CD8-positive, alpha-beta T cell (primary cell): ENCODE measurements at regions of chr17 and their contacts with region 1.

Region 1: GRCh38 chr17:75855310-75856081 is at the start of gene WBP2:
- DNase-seq: peak; percentile 93 to 100 (median 96)
- ATAC-seq: peak; percentile 90
- H3K4me3 ChIP-seq: peak within 1 kb of the TSS; percentile 79 to 83
- H3K4me3 Mint-ChIP-seq: no peak within 1 kb of the TSS
- H3K27ac ChIP-seq: peak within 1 kb of the TSS; percentile 84 to 94
- H3K27ac Mint-ChIP-seq: peak within 1 kb of the TSS; percentile 94
- H3K4me1 ChIP-seq: peaks cover 19% of the 10 kb centered on the region
- H3K4me1 Mint-ChIP-seq: peaks cover 29% of the 10 kb centered on the region
- H3K27me3 ChIP-seq: no peaks in the 10 kb centered on the region
- H3K27me3 Mint-ChIP-seq: no peaks in the 10 kb centered on the region
- CTCF ChIP-seq: peak; percentile 27
- total RNA-seq, gene WBP2: 69.1 to 80.2 TPM

Region 2: GRCh38 chr17:75667021-75667790 is 188.3 kb before region 1 on chr17 and contains the starts of genes RECQL5 and SAP30BP:
- CTCF ChIA-PET with region 1: no interaction called
- POLR2A ChIA-PET with region 1: interaction called, 3 read pairs
- intact Hi-C with region 1: loop called (anchors 1 to 5 kb)
- DNase-seq: peak; percentile 95 to 99 (median 98)
- ATAC-seq: peak; percentile 100
- H3K4me3 ChIP-seq: peak within 1 kb of the TSS; percentile 78 to 85
- H3K4me3 Mint-ChIP-seq: peak within 1 kb of the TSS; percentile 58
- H3K27ac ChIP-seq: peak within 1 kb of the TSS; percentile 88 to 96
- H3K27ac Mint-ChIP-seq: no peak within 1 kb of the TSS
- H3K4me1 ChIP-seq: peaks cover 18% of the 10 kb centered on the region
- H3K4me1 Mint-ChIP-seq: peaks cover 33% of the 10 kb centered on the region
- H3K27me3 ChIP-seq: no peaks in the 10 kb centered on the region
- H3K27me3 Mint-ChIP-seq: no peaks in the 10 kb centered on the region
- CTCF ChIP-seq: no peak
- total RNA-seq, gene RECQL5: 11.2 to 13.2 TPM
- total RNA-seq, gene SAP30BP: 303 to 305 TPM

Region 3: DNA sequence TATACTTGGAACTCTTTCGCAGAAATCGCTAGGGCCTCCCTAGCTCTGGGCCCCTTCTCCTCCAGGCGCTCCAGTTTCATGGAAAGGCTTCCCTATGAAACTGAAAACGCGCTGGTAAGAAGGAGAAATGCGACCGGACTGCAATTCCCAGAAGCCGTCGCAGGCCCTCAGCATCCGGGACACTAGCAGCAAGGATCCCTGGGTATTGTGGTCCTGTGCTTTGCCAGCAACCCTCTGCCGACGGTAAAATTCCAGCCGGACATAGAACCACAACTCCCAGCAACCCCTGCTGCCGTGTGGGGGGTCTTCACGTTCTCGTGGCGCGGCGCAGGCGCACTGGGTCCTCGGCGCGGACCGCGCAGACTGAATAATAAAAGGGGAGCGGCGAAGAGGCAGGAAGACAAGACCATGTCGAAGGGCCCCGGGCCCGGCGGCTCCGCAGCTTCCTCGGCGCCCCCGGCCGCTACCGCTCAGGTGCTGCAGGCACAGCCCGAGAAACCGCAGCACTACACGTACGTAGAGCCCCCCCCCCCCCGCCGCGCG is 71.0 kb before region 1 on chr17 and contains the start of gene UNK:
- CTCF ChIA-PET with region 1: interaction called, 10 read pairs
- POLR2A ChIA-PET with region 1: interaction called, 45 read pairs
- intact Hi-C with region 1: loop called (anchors 1 kb)
- DNase-seq: peak; percentile 91 to 99 (median 96)
- ATAC-seq: peak; percentile 64
- H3K4me3 ChIP-seq: peak within 1 kb of the TSS; percentile 57 to 78
- H3K4me3 Mint-ChIP-seq: peak within 1 kb of the TSS; percentile 93
- H3K27ac ChIP-seq: peak within 1 kb of the TSS; percentile 95 to 100
- H3K27ac Mint-ChIP-seq: peak within 1 kb of the TSS; percentile 98
- H3K4me1 ChIP-seq: peaks cover 39% of the 10 kb centered on the region
- H3K4me1 Mint-ChIP-seq: peaks cover 49% of the 10 kb centered on the region
- H3K27me3 ChIP-seq: no peaks in the 10 kb centered on the region
- H3K27me3 Mint-ChIP-seq: no peaks in the 10 kb centered on the region
- CTCF ChIP-seq: no peak
- total RNA-seq, gene UNK: 37.3 to 42.8 TPM

Region 4: GRCh38 chr17:75872434-75873351 is 17.2 kb after region 1 on chr17:
- CTCF ChIA-PET with region 1: interaction called, 51 read pairs
- POLR2A ChIA-PET with region 1: interaction called, 41 read pairs
- intact Hi-C with region 1: loop called (anchors 1 kb)
- DNase-seq: peak; percentile 41 to 77 (median 61)
- ATAC-seq: peak; percentile 37
- H3K4me3 ChIP-seq: no peak overlapping the region
- H3K4me3 Mint-ChIP-seq: peak overlapping the region; percentile 22
- H3K27ac ChIP-seq: peak overlapping the region; percentile 51 to 64
- H3K27ac Mint-ChIP-seq: peak overlapping the region; percentile 84
- H3K4me1 ChIP-seq: peaks cover 37% of the 10 kb centered on the region
- H3K4me1 Mint-ChIP-seq: peaks cover 35% of the 10 kb centered on the region
- H3K27me3 ChIP-seq: no peaks in the 10 kb centered on the region
- H3K27me3 Mint-ChIP-seq: no peaks in the 10 kb centered on the region
- CTCF ChIP-seq: no peak

Region 5: GRCh38 chr17:75904749-75905521 is 49.4 kb after region 1 on chr17 and contains the start of gene MRPL38:
- CTCF ChIA-PET with region 1: interaction called, 9 read pairs
- POLR2A ChIA-PET with region 1: interaction called, 58 read pairs
- intact Hi-C with region 1: loop called (anchors 1 kb)
- DNase-seq: peak; percentile 85 to 98 (median 91)
- ATAC-seq: peak; percentile 96
- H3K4me3 ChIP-seq: peak within 1 kb of the TSS; percentile 77 to 81
- H3K4me3 Mint-ChIP-seq: peak within 1 kb of the TSS; percentile 84
- H3K27ac ChIP-seq: peak within 1 kb of the TSS; percentile 71 to 81
- H3K27ac Mint-ChIP-seq: peak within 1 kb of the TSS; percentile 92
- H3K4me1 ChIP-seq: peaks cover 14% of the 10 kb centered on the region
- H3K4me1 Mint-ChIP-seq: peaks cover 13% of the 10 kb centered on the region
- H3K27me3 ChIP-seq: no peaks in the 10 kb centered on the region
- H3K27me3 Mint-ChIP-seq: no peaks in the 10 kb centered on the region
- CTCF ChIP-seq: peak; percentile 99
- total RNA-seq, gene MRPL38: 171 to 181 TPM

Region 6: GRCh38 chr17:76005263-76006149 is 150.0 kb after region 1 on chr17:
- CTCF ChIA-PET with region 1: interaction called, 6 read pairs
- POLR2A ChIA-PET with region 1: interaction called, 3 read pairs
- intact Hi-C with region 1: loop called in 1 of 2 experiments (anchors 5 kb)
- DNase-seq: peak; percentile 53 to 90 (median 76)
- ATAC-seq: peak; percentile 63
- H3K4me3 ChIP-seq: no peak overlapping the region
- H3K4me3 Mint-ChIP-seq: no peak overlapping the region
- H3K27ac ChIP-seq: no peak overlapping the region
- H3K27ac Mint-ChIP-seq: no peak overlapping the region
- H3K4me1 ChIP-seq: no peaks in the 10 kb centered on the region
- H3K4me1 Mint-ChIP-seq: no peaks in the 10 kb centered on the region
- H3K27me3 ChIP-seq: no peaks in the 10 kb centered on the region
- H3K27me3 Mint-ChIP-seq: no peaks in the 10 kb centered on the region
- CTCF ChIP-seq: no peak